CD8-positive, alpha-beta T cell (primary cell): ENCODE measurements at regions of chr5 and their contacts with region 1.

Region 1: DNA sequence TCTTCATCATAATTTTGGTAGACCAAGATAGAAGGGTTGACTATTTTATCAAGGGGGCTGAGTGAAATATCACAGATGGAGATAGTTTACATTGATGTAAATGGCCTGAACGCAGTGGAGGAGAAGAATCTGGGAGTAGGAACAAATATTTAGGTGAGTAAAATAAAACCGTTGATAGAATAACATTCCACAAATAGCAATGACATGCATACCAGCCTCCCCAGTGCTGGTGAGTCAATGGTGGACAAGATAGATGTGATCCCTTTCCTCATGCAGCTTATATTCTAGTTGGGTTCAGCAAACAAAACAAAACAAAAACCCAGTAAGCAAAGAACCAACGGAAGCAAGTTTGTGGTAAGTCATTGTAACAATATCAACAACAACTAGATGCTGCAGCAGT is 385.2 kb downstream of the FAM170A start:
- DNase-seq: no peak
- ATAC-seq: no peak
- H3K4me3 ChIP-seq: no peak overlapping the region
- H3K4me3 Mint-ChIP-seq: no peak overlapping the region
- H3K27ac ChIP-seq: no peak overlapping the region
- H3K27ac Mint-ChIP-seq: no peak overlapping the region
- H3K4me1 ChIP-seq: no peaks in the 10 kb centered on the region
- H3K4me1 Mint-ChIP-seq: no peaks in the 10 kb centered on the region
- H3K27me3 ChIP-seq: no peaks in the 10 kb centered on the region
- H3K27me3 Mint-ChIP-seq: no peaks in the 10 kb centered on the region
- CTCF ChIP-seq: no peak

Region 2: GRCh38 chr5:119974731-119975434 is 39.7 kb before region 1 on chr5:
- CTCF ChIA-PET with region 1: no interaction called
- POLR2A ChIA-PET with region 1: no interaction called
- intact Hi-C with region 1: no loop called
- DNase-seq: no peak
- ATAC-seq: no peak
- H3K4me3 ChIP-seq: no peak overlapping the region
- H3K4me3 Mint-ChIP-seq: no peak overlapping the region
- H3K27ac ChIP-seq: no peak overlapping the region
- H3K27ac Mint-ChIP-seq: no peak overlapping the region
- H3K4me1 ChIP-seq: no peaks in the 10 kb centered on the region
- H3K4me1 Mint-ChIP-seq: no peaks in the 10 kb centered on the region
- H3K27me3 ChIP-seq: no peaks in the 10 kb centered on the region
- H3K27me3 Mint-ChIP-seq: no peaks in the 10 kb centered on the region
- CTCF ChIP-seq: no peak

Region 3: DNA sequence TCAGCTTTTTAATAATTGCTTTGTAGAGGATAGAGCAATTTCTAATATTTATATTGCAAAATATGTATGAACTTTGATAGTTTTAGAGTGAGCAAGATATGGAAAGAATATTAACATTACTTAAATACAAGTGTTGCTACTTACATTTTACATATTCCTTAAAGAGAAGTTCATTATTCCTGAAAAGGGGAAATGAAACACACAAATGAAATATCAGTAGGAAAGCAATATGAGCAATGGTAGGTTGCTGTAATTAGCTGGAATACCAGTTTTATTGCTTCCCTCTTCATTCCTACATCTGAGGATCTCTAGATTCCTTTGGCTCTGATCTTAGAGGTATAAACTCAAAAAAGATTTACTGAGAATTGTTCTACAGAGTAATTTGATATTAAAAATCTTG is 28.9 kb after region 1 on chr5:
- CTCF ChIA-PET with region 1: no interaction called
- POLR2A ChIA-PET with region 1: no interaction called
- intact Hi-C with region 1: no loop called
- DNase-seq: no peak
- ATAC-seq: no peak
- H3K4me3 ChIP-seq: no peak overlapping the region
- H3K4me3 Mint-ChIP-seq: no peak overlapping the region
- H3K27ac ChIP-seq: no peak overlapping the region
- H3K27ac Mint-ChIP-seq: no peak overlapping the region
- H3K4me1 ChIP-seq: no peaks in the 10 kb centered on the region
- H3K4me1 Mint-ChIP-seq: no peaks in the 10 kb centered on the region
- H3K27me3 ChIP-seq: no peaks in the 10 kb centered on the region
- H3K27me3 Mint-ChIP-seq: no peaks in the 10 kb centered on the region
- CTCF ChIP-seq: no peak

Region 4: GRCh38 chr5:120055858-120056257 is 41.3 kb after region 1 on chr5:
- CTCF ChIA-PET with region 1: no interaction called
- POLR2A ChIA-PET with region 1: no interaction called
- intact Hi-C with region 1: loop called in 1 of 2 experiments (anchors 1 kb)
- DNase-seq: no peak
- ATAC-seq: no peak
- H3K4me3 ChIP-seq: no peak overlapping the region
- H3K4me3 Mint-ChIP-seq: no peak overlapping the region
- H3K27ac ChIP-seq: no peak overlapping the region
- H3K27ac Mint-ChIP-seq: no peak overlapping the region
- H3K4me1 ChIP-seq: no peaks in the 10 kb centered on the region
- H3K4me1 Mint-ChIP-seq: no peaks in the 10 kb centered on the region
- H3K27me3 ChIP-seq: no peaks in the 10 kb centered on the region
- H3K27me3 Mint-ChIP-seq: no peaks in the 10 kb centered on the region
- CTCF ChIP-seq: no peak

Region 5: DNA sequence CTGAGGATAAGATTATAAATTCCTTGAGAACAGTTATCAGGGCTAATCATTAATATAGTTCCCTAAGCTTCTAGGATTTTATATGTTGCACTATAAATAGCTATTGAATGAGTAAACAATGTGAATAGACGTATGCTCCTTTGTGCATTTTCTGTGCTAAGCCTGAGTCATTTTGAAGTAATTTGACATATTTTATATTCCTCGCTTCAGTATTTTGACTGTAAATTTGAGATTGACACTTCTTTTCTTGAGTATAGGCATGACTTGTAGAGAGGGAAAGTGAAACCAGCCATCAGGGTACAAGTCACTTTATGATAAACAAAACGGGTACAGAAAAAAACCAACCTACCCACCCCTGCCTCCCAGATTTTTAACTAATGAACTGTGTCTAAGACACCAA is 81.9 kb after region 1 on chr5:
- CTCF ChIA-PET with region 1: no interaction called
- POLR2A ChIA-PET with region 1: no interaction called
- intact Hi-C with region 1: no loop called
- DNase-seq: peak in 2 of 9 experiments; percentile 4 to 13
- ATAC-seq: no peak
- H3K4me3 ChIP-seq: no peak overlapping the region
- H3K4me3 Mint-ChIP-seq: no peak overlapping the region
- H3K27ac ChIP-seq: no peak overlapping the region
- H3K27ac Mint-ChIP-seq: no peak overlapping the region
- H3K4me1 ChIP-seq: no peaks in the 10 kb centered on the region
- H3K4me1 Mint-ChIP-seq: peaks cover 3% of the 10 kb centered on the region
- H3K27me3 ChIP-seq: no peaks in the 10 kb centered on the region
- H3K27me3 Mint-ChIP-seq: no peaks in the 10 kb centered on the region
- CTCF ChIP-seq: no peak